PC-9 (cell line): ENCODE measurements at regions of chr6 and their contacts with region 1.

Region 1: GRCh38 chr6:26156076-26156849 is 69.0 kb downstream of the HFE start:
- DNase-seq: peak; percentile 71 to 90
- H3K4me3 ChIP-seq: peak overlapping the region; percentile 87
- H3K27ac ChIP-seq: peak overlapping the region; percentile 85
- H3K4me1 ChIP-seq: peaks cover 14% of the 10 kb centered on the region
- H3K27me3 ChIP-seq: no peaks in the 10 kb centered on the region
- CTCF ChIP-seq: no peak; the same call in 1 of the 2 replicates

Region 2: DNA sequence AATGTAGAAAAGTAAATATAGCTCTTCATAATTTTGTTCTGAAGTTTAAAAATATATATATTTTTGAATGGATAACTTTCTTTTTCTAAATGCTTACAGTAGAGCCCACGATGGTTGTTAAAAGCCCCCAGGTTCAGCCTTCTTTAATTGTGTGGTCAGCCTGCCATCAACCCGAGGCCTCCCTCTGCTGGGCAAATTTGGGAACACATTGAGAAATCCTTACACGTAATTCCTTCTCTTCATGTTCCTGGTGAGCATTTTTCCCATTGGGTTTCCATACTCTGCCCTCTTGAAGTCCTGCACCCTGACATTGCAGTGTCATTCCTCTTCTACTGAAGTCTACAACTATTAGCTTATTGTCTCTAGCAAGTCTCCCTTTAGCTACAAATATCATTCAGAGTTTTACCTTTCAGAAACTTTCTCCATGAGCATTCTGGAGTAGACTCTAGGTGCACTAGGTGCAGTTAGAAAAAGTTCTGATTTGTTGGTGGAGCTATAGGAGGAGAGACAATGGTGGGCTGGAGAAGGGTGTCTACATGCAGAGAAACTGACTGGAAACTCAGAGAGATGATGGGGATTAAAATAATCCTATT is 153.1 kb before region 1 on chr6:
- CTCF ChIA-PET with region 1: no interaction called
- POLR2A ChIA-PET with region 1: no interaction called
- intact Hi-C with region 1: no loop called
- DNase-seq: peak in 1 of 2 experiments; percentile 61
- H3K4me3 ChIP-seq: no peak overlapping the region
- H3K27ac ChIP-seq: no peak overlapping the region
- H3K4me1 ChIP-seq: no peaks in the 10 kb centered on the region
- H3K27me3 ChIP-seq: no peaks in the 10 kb centered on the region
- CTCF ChIP-seq: peak; percentile 87

Region 3: GRCh38 chr6:26020329-26021000 is 135.8 kb before region 1 on chr6:
- CTCF ChIA-PET with region 1: interaction called, 17 read pairs
- POLR2A ChIA-PET with region 1: interaction called, 9 read pairs
- intact Hi-C with region 1: no loop called
- DNase-seq: peak; percentile 78 to 84
- H3K4me3 ChIP-seq: peak overlapping the region; percentile 84
- H3K27ac ChIP-seq: peak overlapping the region; percentile 94
- H3K4me1 ChIP-seq: peaks cover 27% of the 10 kb centered on the region
- H3K27me3 ChIP-seq: no peaks in the 10 kb centered on the region
- CTCF ChIP-seq: no peak

Region 4: GRCh38 chr6:26065952-26066380 is 90.3 kb before region 1 on chr6:
- CTCF ChIA-PET with region 1: interaction called, 4 read pairs
- POLR2A ChIA-PET with region 1: interaction called, 14 read pairs
- intact Hi-C with region 1: loop called (anchors 1 kb)
- DNase-seq: peak; percentile 65 to 79
- H3K4me3 ChIP-seq: no peak overlapping the region
- H3K27ac ChIP-seq: peak overlapping the region; percentile 69
- H3K4me1 ChIP-seq: peaks cover 36% of the 10 kb centered on the region
- H3K27me3 ChIP-seq: no peaks in the 10 kb centered on the region
- CTCF ChIP-seq: peak; percentile 88

Region 5: GRCh38 chr6:26175428-26176181 is 19.3 kb after region 1 on chr6:
- CTCF ChIA-PET with region 1: interaction called, 5 read pairs
- POLR2A ChIA-PET with region 1: interaction called, 5 read pairs
- intact Hi-C with region 1: loop called (anchors 2 kb)
- DNase-seq: no peak
- H3K4me3 ChIP-seq: no peak overlapping the region
- H3K27ac ChIP-seq: no peak overlapping the region
- H3K4me1 ChIP-seq: peaks cover 23% of the 10 kb centered on the region
- H3K27me3 ChIP-seq: no peaks in the 10 kb centered on the region
- CTCF ChIP-seq: peak; percentile 82

Region 6: GRCh38 chr6:26204332-26205165 is 48.3 kb after region 1 on chr6:
- CTCF ChIA-PET with region 1: no interaction called
- POLR2A ChIA-PET with region 1: interaction called, 40 read pairs
- intact Hi-C with region 1: loop called (anchors 1 kb)
- DNase-seq: peak; percentile 91 to 94
- H3K4me3 ChIP-seq: peak overlapping the region; percentile 63
- H3K27ac ChIP-seq: peak overlapping the region; percentile 91
- H3K4me1 ChIP-seq: peaks cover 36% of the 10 kb centered on the region
- H3K27me3 ChIP-seq: no peaks in the 10 kb centered on the region
- CTCF ChIP-seq: 0 out of 2 replicates have a peak, but pooled peaks have one; percentile 20

Region 7: GRCh38 chr6:26285143-26286134 is 129.2 kb after region 1 on chr6:
- CTCF ChIA-PET with region 1: no interaction called
- POLR2A ChIA-PET with region 1: interaction called, 11 read pairs
- intact Hi-C with region 1: loop called (anchors 1 kb)
- DNase-seq: peak; percentile 96 to 99
- H3K4me3 ChIP-seq: peak overlapping the region; percentile 84
- H3K27ac ChIP-seq: peak overlapping the region; percentile 93
- H3K4me1 ChIP-seq: peaks cover 11% of the 10 kb centered on the region
- H3K27me3 ChIP-seq: no peaks in the 10 kb centered on the region
- CTCF ChIP-seq: no peak

Region 8: GRCh38 chr6:26358511-26358981 is 202.3 kb after region 1 on chr6:
- CTCF ChIA-PET with region 1: no interaction called
- POLR2A ChIA-PET with region 1: no interaction called
- intact Hi-C with region 1: no loop called
- DNase-seq: no peak
- H3K4me3 ChIP-seq: no peak overlapping the region
- H3K27ac ChIP-seq: no peak overlapping the region
- H3K4me1 ChIP-seq: no peaks in the 10 kb centered on the region
- H3K27me3 ChIP-seq: no peaks in the 10 kb centered on the region
- CTCF ChIP-seq: no peak

Region 9: DNA sequence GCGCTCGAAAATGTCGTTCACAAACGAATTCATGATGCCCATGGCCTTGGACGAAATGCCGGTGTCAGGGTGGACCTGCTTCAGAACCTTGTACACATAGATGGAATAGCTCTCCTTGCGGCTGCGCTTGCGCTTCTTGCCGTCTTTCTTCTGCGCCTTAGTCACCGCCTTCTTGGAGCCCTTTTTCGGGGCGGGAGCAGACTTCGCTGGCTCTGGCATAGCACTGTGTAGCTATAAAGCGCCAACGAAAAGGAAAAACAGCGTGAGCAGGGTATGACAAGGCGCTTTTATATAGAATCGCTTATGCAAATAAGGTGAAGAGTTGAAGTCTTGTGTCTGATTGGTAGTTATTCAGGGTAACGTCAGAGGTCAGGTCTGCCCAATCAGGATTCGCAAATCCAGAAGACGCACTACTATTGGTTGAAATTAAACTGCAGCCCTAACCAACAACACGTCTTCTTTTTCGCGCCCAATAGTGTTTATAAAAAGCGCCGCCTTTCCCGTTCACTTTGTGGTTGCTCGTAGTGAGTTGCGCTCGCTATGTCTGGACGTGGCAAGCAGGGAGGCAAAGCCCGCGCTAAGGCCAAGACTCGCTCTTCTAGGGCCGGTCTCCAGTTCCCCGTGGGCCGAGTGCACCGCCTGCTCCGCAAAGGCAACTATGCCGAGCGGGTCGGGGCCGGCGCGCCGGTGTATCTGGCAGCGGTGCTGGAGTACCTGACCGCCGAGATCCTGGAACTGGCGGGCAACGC is 976.4 kb after region 1 on chr6:
- CTCF ChIA-PET with region 1: interaction called, 8 read pairs
- POLR2A ChIA-PET with region 1: interaction called, 28 read pairs
- intact Hi-C with region 1: no loop called
- DNase-seq: peak; percentile 95 to 98
- H3K4me3 ChIP-seq: peak overlapping the region; percentile 74
- H3K27ac ChIP-seq: peak overlapping the region; percentile 80
- H3K4me1 ChIP-seq: peaks cover 16% of the 10 kb centered on the region
- H3K27me3 ChIP-seq: no peaks in the 10 kb centered on the region
- CTCF ChIP-seq: no peak